A673 (cell line): ENCODE measurements at regions of chr20 and their contacts with region 1.

Region 1: GRCh38 chr20:47356526-47357295 is at the start of gene ZMYND8:
- DNase-seq: peak; percentile 96
- H3K4me3 ChIP-seq: peak within 1 kb of the TSS; percentile 32
- H3K27ac ChIP-seq: peak within 1 kb of the TSS; percentile 97
- H3K4me1 ChIP-seq: peaks cover 79% of the 10 kb centered on the region
- H3K27me3 ChIP-seq: no peaks in the 10 kb centered on the region
- CTCF ChIP-seq: no peak
- total RNA-seq, gene ZMYND8: 31.3 and 35.2 TPM in 2 replicates

Region 2: GRCh38 chr20:47317127-47317895 is 39.4 kb before region 1 on chr20:
- CTCF ChIA-PET with region 1: no interaction called
- POLR2A ChIA-PET with region 1: no interaction called
- intact Hi-C with region 1: loop called (anchors 5 kb)
- DNase-seq: peak; percentile 90
- H3K4me3 ChIP-seq: no peak overlapping the region
- H3K27ac ChIP-seq: peak overlapping the region; percentile 87
- H3K4me1 ChIP-seq: peaks cover 54% of the 10 kb centered on the region
- H3K27me3 ChIP-seq: no peaks in the 10 kb centered on the region
- CTCF ChIP-seq: no peak